ENCODE measurements at regions of chr3 and their contacts with region 1.

Region 1: GRCh38 chr3:195532834-195533233 is 10.3 kb downstream of the PPP1R2 start:
- DNase-seq: no peak
- ATAC-seq: peak; percentile 67 to 78 (median 75)
- H3K4me3 ChIP-seq: peak overlapping the region; percentile 8
- H3K27ac ChIP-seq: peak overlapping the region; percentile 73
- H3K4me1 ChIP-seq: peaks cover 72% of the 10 kb centered on the region
- H3K27me3 ChIP-seq: no peaks in the 10 kb centered on the region
- CTCF ChIP-seq: no peak

Region 2: GRCh38 chr3:194671900-194672808 is 860.7 kb before region 1 on chr3 and contains the start of gene LSG1:
- intact Hi-C with region 1: loop called in 1 of 2 experiments (anchors 5 kb)
- DNase-seq: peak; percentile 92 to 96
- ATAC-seq: peak; percentile 96 to 97 (median 96)
- H3K4me3 ChIP-seq: peak within 1 kb of the TSS; percentile 83
- H3K27ac ChIP-seq: peak within 1 kb of the TSS; percentile 84
- H3K4me1 ChIP-seq: peaks cover 29% of the 10 kb centered on the region
- H3K27me3 ChIP-seq: no peaks in the 10 kb centered on the region
- CTCF ChIP-seq: no peak
- total RNA-seq, gene LSG1: 24.8 to 37.5 (median 28.7) TPM

Measured in psoas muscle (tissue), 8 donors.